CD4-positive, alpha-beta T cell (primary cell): ENCODE measurements at regions of chr17 and their contacts with region 1.

Region 1: DNA sequence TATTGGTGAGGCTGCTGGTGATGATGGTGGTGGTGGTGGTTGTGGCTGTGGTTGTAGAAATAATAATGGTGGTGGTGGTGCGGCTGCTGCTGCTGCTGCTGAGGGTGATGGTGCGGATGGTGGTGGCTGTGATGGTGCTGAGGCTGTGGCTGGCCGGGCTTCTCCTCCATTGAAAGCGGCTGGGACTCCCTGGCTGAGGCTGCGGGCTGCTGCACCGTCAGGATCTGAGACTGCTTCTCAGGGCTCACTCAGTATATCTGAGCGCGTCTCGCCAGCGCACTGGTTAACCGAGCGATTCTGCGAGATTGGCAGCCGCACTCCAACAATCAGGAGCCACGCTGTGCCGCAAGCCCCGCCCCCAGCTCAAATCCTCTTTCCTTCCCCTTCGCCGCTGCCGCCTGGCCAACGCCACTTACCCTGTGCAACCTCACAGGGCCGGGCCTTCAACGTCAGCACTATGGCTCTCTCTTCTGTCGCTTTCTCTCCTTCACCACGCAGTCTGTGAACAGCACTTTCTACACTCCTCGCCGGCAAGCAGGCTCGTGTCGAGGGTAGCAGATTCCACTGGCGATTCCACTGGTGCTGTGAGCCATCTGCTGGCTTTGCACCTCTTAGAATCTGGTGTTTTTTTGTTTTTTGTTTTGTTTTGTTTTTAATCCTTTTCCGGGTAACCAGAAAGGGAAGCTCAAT is at the start of gene NUFIP2:
- DNase-seq: peak; percentile 95 to 100 (median 98)
- ATAC-seq: peak; percentile 84
- H3K4me3 ChIP-seq: peak within 1 kb of the TSS; percentile 98
- H3K4me3 Mint-ChIP-seq: peak within 1 kb of the TSS; percentile 99
- H3K27ac ChIP-seq: peak within 1 kb of the TSS; percentile 82 to 92
- H3K27ac Mint-ChIP-seq: peak within 1 kb of the TSS; percentile 96
- H3K4me1 ChIP-seq: peaks cover 20% of the 10 kb centered on the region
- H3K4me1 Mint-ChIP-seq: peaks cover 47% of the 10 kb centered on the region
- H3K27me3 ChIP-seq: no peaks in the 10 kb centered on the region
- H3K27me3 Mint-ChIP-seq: no peaks in the 10 kb centered on the region
- CTCF ChIP-seq: no peak
- total RNA-seq, gene NUFIP2: 78.4 to 82.2 TPM

Region 2: GRCh38 chr17:29140051-29140621 is 153.9 kb before region 1 on chr17:
- CTCF ChIA-PET with region 1: interaction called, 6 read pairs
- POLR2A ChIA-PET with region 1: interaction called, 13 read pairs
- intact Hi-C with region 1: loop called in 1 of 2 experiments (anchors 1 kb)
- DNase-seq: peak; percentile 57 to 90 (median 78)
- ATAC-seq: peak; percentile 53
- H3K4me3 ChIP-seq: peak overlapping the region; percentile 64
- H3K4me3 Mint-ChIP-seq: peak overlapping the region; percentile 91
- H3K27ac ChIP-seq: peak overlapping the region; percentile 78 to 82
- H3K27ac Mint-ChIP-seq: peak overlapping the region; percentile 96
- H3K4me1 ChIP-seq: peaks cover 80% of the 10 kb centered on the region
- H3K4me1 Mint-ChIP-seq: peaks cover 70% of the 10 kb centered on the region
- H3K27me3 ChIP-seq: no peaks in the 10 kb centered on the region
- H3K27me3 Mint-ChIP-seq: no peaks in the 10 kb centered on the region
- CTCF ChIP-seq: no peak

Region 3: DNA sequence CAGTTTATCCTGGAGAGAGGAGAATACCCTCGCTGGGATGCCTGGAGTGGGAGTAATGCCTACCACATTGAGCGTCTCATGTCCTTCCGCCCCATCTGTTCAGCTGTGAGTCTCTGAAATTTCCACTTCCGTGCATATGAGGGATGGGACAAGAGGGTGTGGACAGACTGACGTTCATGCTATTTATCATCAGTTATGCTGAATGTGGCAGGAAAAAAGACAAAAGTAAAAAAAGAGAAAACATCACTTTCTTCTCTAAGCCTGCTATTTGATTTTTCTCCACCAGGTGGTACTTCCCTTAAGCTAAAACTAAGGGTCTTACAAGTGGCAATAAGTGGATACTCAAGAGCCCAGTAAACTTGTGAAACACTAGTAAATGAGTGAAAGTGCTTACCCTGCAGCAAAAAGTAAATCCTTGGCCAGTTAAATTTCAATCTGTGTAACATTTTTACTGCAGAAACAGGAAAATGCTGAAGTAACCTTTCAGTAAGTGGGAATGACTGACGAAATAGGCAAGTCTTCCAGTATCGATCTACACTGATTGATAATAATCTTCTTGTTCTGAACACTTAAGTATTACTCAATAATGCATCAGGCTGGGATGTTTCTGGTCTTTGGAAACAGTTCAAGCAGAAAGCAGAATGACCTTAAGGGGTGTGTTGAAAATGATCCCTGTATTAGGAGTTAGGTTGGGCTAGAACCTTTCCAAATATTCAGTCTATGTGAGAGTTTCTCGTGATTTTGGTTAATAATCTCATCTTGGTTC is 41.8 kb before region 1 on chr17:
- CTCF ChIA-PET with region 1: interaction called, 8 read pairs
- POLR2A ChIA-PET with region 1: interaction called, 6 read pairs
- intact Hi-C with region 1: loop called (anchors 2 kb)
- DNase-seq: peak in 2 of 14 experiments; percentile 40 to 42
- ATAC-seq: no peak
- H3K4me3 ChIP-seq: no peak overlapping the region
- H3K4me3 Mint-ChIP-seq: no peak overlapping the region
- H3K27ac ChIP-seq: no peak overlapping the region
- H3K27ac Mint-ChIP-seq: no peak overlapping the region
- H3K4me1 ChIP-seq: no peaks in the 10 kb centered on the region
- H3K4me1 Mint-ChIP-seq: peaks cover 6% of the 10 kb centered on the region
- H3K27me3 ChIP-seq: no peaks in the 10 kb centered on the region
- H3K27me3 Mint-ChIP-seq: no peaks in the 10 kb centered on the region
- CTCF ChIP-seq: peak; percentile 54

Region 4: DNA sequence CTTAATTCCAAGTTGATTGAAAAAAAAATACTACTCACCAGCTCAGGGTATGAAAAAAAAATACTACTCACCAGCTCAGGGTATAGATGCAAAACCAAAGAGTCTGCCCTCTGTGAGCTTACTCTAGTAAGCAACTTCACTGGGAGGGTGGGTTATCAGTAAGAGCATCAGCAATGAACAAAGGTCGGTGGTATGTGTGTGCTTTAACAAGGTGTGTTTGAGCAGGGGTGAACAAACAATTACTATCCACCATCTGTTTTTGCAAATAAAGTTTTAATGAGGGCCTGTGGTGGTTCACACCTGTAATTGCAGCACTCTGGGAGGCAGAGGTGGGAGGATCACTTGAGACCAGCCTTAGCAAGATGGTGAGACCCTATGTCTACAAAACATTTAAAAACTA is 20.1 kb before region 1 on chr17:
- CTCF ChIA-PET with region 1: interaction called, 4 read pairs
- POLR2A ChIA-PET with region 1: interaction called, 5 read pairs
- intact Hi-C with region 1: loop called in 1 of 2 experiments (anchors 2 kb)
- DNase-seq: no peak
- ATAC-seq: no peak
- H3K4me3 ChIP-seq: no peak overlapping the region
- H3K4me3 Mint-ChIP-seq: no peak overlapping the region
- H3K27ac ChIP-seq: no peak overlapping the region
- H3K27ac Mint-ChIP-seq: peak overlapping the region; percentile 21
- H3K4me1 ChIP-seq: peaks cover 51% of the 10 kb centered on the region
- H3K4me1 Mint-ChIP-seq: peaks cover 64% of the 10 kb centered on the region
- H3K27me3 ChIP-seq: no peaks in the 10 kb centered on the region
- H3K27me3 Mint-ChIP-seq: no peaks in the 10 kb centered on the region
- CTCF ChIP-seq: no peak

Region 5: GRCh38 chr17:29369831-29370735 is 76.0 kb after region 1 on chr17:
- CTCF ChIA-PET with region 1: interaction called, 7 read pairs
- POLR2A ChIA-PET with region 1: interaction called, 12 read pairs
- intact Hi-C with region 1: no loop called
- DNase-seq: peak; percentile 18 to 81 (median 48)
- ATAC-seq: peak; percentile 96
- H3K4me3 ChIP-seq: no peak overlapping the region
- H3K4me3 Mint-ChIP-seq: no peak overlapping the region
- H3K27ac ChIP-seq: peak overlapping the region in 1 of 2 donors; percentile 18
- H3K27ac Mint-ChIP-seq: no peak overlapping the region
- H3K4me1 ChIP-seq: peaks cover 3% of the 10 kb centered on the region
- H3K4me1 Mint-ChIP-seq: no peaks in the 10 kb centered on the region
- H3K27me3 ChIP-seq: no peaks in the 10 kb centered on the region
- H3K27me3 Mint-ChIP-seq: no peaks in the 10 kb centered on the region
- CTCF ChIP-seq: peak; percentile 80

Region 6: GRCh38 chr17:29389982-29390850 is 96.2 kb after region 1 on chr17 and contains the start of gene TAOK1:
- CTCF ChIA-PET with region 1: no interaction called
- POLR2A ChIA-PET with region 1: interaction called, 5 read pairs
- intact Hi-C with region 1: loop called in 1 of 2 experiments (anchors 2 kb)
- DNase-seq: peak; percentile 93 to 99 (median 98)
- ATAC-seq: peak; percentile 89
- H3K4me3 ChIP-seq: peak within 1 kb of the TSS; percentile 88
- H3K4me3 Mint-ChIP-seq: peak within 1 kb of the TSS; percentile 99
- H3K27ac ChIP-seq: peak within 1 kb of the TSS; percentile 79 to 93
- H3K27ac Mint-ChIP-seq: peak within 1 kb of the TSS; percentile 97
- H3K4me1 ChIP-seq: peaks cover 20% of the 10 kb centered on the region
- H3K4me1 Mint-ChIP-seq: peaks cover 47% of the 10 kb centered on the region
- H3K27me3 ChIP-seq: no peaks in the 10 kb centered on the region
- H3K27me3 Mint-ChIP-seq: no peaks in the 10 kb centered on the region
- CTCF ChIP-seq: no peak
- total RNA-seq, gene TAOK1: 33.1 to 33.8 TPM

Region 7: GRCh38 chr17:30187573-30187972 is 893.5 kb after region 1 on chr17:
- CTCF ChIA-PET with region 1: no interaction called
- POLR2A ChIA-PET with region 1: no interaction called
- intact Hi-C with region 1: no loop called
- DNase-seq: no peak
- ATAC-seq: no peak
- H3K4me3 ChIP-seq: no peak overlapping the region
- H3K4me3 Mint-ChIP-seq: no peak overlapping the region
- H3K27ac ChIP-seq: no peak overlapping the region
- H3K27ac Mint-ChIP-seq: peak overlapping the region; percentile 19
- H3K4me1 ChIP-seq: no peaks in the 10 kb centered on the region
- H3K4me1 Mint-ChIP-seq: no peaks in the 10 kb centered on the region
- H3K27me3 ChIP-seq: no peaks in the 10 kb centered on the region
- H3K27me3 Mint-ChIP-seq: no peaks in the 10 kb centered on the region
- CTCF ChIP-seq: no peak